Activated CD4-positive, alpha-beta memory T cell treated with anti-CD3 and anti-CD28 coated beads for 36 hours (primary cell): ENCODE measurements at regions of chr15 and their contacts with region 1.

Region 1: GRCh38 chr15:76330080-76330680 is 6.4 kb upstream of the ISL2 start:
- DNase-seq: no peak
- H3K4me3 Mint-ChIP-seq: no peak overlapping the region
- H3K27ac Mint-ChIP-seq: no peak overlapping the region
- H3K4me1 Mint-ChIP-seq: peaks cover 2% of the 10 kb centered on the region
- H3K27me3 Mint-ChIP-seq: peaks cover 50% of the 10 kb centered on the region

Region 2: GRCh38 chr15:76235186-76235826 is 94.9 kb before region 1 on chr15:
- CTCF ChIA-PET with region 1: interaction called, 6 read pairs
- POLR2A ChIA-PET with region 1: no interaction called
- intact Hi-C with region 1: loop called (anchors 5 kb)
- DNase-seq: no peak
- H3K4me3 Mint-ChIP-seq: no peak overlapping the region
- H3K27ac Mint-ChIP-seq: no peak overlapping the region
- H3K4me1 Mint-ChIP-seq: no peaks in the 10 kb centered on the region
- H3K27me3 Mint-ChIP-seq: no peaks in the 10 kb centered on the region

Region 3: DNA sequence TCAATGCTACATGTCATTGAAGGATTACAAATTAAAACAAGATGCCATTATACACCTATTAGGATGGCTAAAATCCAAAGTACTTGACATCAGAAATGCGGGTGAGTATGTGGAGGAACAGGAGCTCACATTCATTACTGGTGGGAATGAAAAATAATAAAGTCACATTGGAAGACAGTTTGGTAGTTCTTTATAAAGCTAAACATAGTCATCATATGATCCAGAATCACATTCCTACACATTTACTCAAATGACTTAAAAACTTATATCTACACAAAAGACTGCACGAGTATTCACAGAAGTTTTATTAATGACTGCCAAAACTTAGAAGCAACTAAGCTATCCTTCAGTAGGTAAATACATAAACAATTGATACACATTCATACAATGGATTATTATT is 153.6 kb after region 1 on chr15:
- CTCF ChIA-PET with region 1: no interaction called
- POLR2A ChIA-PET with region 1: no interaction called
- intact Hi-C with region 1: no loop called
- DNase-seq: no peak
- H3K4me3 Mint-ChIP-seq: no peak overlapping the region
- H3K27ac Mint-ChIP-seq: no peak overlapping the region
- H3K4me1 Mint-ChIP-seq: no peaks in the 10 kb centered on the region
- H3K27me3 Mint-ChIP-seq: no peaks in the 10 kb centered on the region